Posterior cingulate gyrus (tissue), 11 donors: ENCODE measurements at regions of chr17 and their contacts with region 1.

Region 1: GRCh38 chr17:7897773-7898172 is 9.2 kb downstream of the CHD3 start:
- DNase-seq: peak in 2 of 10 donors; percentile 27 to 35

Region 2: GRCh38 chr17:7862692-7863437 is 34.9 kb before region 1 on chr17:
- intact Hi-C with region 1: loop called (anchors 2 kb)
- DNase-seq: peak in 4 of 10 donors; percentile 50 to 65 (median 60)